ENCODE measurements at regions of chr6 and their contacts with region 1.

Region 1: DNA sequence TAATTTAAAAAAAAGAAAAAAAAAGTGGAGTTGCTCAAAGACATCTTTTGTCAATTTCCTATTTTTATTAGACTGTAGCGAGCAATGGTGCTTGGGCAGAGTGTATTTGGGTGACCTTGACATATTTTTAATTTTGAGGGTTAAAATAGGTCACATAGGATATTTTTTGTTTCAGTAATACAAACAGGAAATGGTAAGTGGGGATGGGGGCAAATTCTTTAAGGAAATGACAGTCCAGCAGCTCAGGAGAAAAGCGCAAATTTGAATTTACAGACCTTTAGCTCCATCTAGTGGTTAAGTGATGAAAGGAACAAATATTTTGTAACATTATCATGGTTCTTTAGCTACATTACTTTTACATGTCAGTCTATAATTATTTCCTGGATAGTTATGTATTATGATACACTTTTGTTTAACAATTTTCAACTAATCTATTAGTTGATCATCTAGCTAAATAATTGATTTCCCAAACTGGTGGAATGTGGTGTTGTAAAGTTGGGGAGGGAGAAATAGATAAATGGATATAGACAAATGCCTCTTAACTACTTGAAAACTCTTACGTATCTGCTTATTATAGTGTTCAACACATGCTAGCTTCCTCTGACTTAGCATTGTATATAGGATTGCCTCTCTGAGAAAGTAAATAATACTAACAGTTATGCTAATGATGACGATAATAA is 10.0 kb downstream of the CITED2 start:
- DNase-seq: no peak
- H3K4me3 ChIP-seq: no peak overlapping the region
- H3K27ac ChIP-seq: no peak overlapping the region
- H3K4me1 ChIP-seq: peaks cover 0 to 6% (median under 1%) of the 10 kb centered on the region in 4 donors
- H3K27me3 ChIP-seq: no peaks in the 10 kb centered on the region
- CTCF ChIP-seq: peak; percentile 71 to 88 (median 73)
- EP300 ChIP-seq: no peak
- POLR2A ChIP-seq: no peak

Region 2: DNA sequence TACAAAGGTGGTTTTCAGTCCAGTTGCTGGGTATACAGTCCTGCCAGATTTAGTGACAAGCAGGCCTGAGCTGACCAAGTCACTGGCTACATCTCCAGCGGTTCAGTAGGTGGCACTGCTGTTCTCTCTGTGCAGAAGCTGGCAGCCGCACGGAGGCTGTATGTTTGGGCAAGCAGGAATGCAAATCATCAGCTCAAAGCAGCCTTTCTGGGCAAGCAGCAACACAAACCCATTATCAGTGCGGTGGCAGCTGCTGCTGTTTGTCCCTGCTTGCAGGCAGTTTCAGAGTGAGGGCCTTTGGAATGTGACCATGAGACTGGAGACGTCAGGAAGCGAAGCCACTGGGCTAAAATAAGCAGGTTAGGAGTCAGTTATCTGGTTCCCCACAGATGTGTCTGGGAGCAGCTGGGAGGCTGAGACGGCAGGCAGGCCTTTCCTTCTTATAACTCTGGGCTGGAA is 145.1 kb before region 1 on chr6:
- in situ Hi-C with region 1: loop called in 3 of 4 experiments (anchors 10 kb)
- intact Hi-C with region 1: loop called (anchors 5 kb)
- DNase-seq: peak; percentile 82
- H3K4me3 ChIP-seq: no peak overlapping the region
- H3K27ac ChIP-seq: peak overlapping the region in 2 of 4 donors; percentile 4 to 69
- H3K4me1 ChIP-seq: peaks cover 0 to 5% (median 4%) of the 10 kb centered on the region in 4 donors
- H3K27me3 ChIP-seq: no peaks in the 10 kb centered on the region
- CTCF ChIP-seq: peak; percentile 66 to 79 (median 69)
- EP300 ChIP-seq: no peak
- POLR2A ChIP-seq: no peak

Region 3: DNA sequence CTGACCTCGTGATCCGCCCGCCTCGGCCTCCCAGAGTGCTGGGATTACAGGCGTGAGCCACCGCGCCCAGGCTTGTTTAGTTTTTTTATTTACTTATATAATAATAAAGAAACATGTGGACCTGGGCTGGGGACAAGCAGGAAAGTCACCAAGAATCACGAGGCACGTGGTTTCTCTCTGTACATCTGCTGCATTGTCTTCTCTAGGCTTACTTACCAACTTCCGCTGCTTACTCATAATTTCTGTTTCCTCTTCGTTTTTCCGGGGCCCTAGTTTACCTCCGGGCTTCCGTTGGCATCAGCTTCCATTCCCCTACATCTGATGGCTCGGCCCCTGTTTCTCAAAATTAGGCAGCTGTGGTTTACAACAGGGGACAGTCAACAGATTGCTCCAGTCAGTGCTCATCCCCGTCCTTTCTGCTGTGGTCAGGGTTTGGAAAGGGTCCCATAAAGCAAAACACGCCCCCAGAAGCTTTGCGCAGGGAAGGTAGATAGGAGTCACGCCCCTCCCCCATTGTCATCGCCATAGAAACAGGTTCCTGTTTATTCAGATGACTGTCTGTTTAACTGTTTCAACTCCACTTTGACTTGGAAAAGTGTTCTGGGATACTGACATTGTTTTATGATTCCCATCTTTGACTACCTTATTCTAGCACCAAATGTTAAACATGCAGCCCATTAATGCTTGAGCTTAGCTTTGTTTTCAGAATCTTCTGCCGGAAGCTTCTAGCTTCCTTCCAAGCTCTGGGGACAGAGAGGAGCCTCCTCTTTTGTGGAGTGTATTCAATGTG is 40.7 kb before region 1 on chr6:
- in situ Hi-C with region 1: no loop called
- intact Hi-C with region 1: no loop called
- DNase-seq: peak; percentile 81
- H3K4me3 ChIP-seq: peak overlapping the region in 2 of 4 donors; percentile 1 to 6
- H3K27ac ChIP-seq: peak overlapping the region; percentile 54 to 73 (median 66)
- H3K4me1 ChIP-seq: peaks cover 0 to 27% (median 0%) of the 10 kb centered on the region in 4 donors
- H3K27me3 ChIP-seq: no peaks in the 10 kb centered on the region
- CTCF ChIP-seq: no peak
- EP300 ChIP-seq: no peak
- POLR2A ChIP-seq: no peak

Measured in transverse colon (tissue), 4 donors.